ENCODE measurements at regions of chr1 and their contacts with region 1.

Region 1: DNA sequence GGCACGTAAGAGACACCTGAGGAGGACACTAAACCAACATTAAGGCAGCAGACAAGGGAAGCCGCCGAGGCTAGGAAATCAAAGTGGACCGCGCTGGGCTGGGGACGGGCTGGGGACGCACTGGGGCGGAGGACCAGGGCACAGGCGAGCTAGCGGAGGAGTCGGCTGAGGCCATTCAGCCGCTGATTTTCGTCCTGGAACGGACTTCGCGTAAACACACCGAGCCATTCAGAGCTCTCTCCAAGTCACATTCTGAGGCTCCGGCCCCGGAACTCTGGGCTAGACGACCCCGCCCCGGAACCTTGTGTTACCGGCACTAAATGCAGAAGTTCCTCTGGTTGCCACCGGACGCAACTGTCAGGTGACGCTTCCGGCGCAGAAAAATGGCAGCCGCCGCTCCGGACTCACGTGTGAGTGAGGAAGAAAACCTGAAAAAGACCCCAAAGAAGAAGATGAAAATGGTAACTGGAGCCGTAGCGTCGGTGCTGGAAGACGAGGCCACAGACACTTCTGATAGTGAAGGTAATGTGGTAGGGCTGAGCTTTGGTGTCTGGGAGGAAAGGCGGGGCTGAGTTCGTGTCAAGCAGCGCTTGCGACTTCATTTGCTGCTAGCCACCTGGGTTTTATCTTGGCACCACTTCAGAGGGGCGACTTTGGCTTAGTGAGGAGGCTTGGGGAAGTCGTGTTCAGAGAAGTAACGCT is at the start of gene RRP15:
- DNase-seq: peak; percentile 68 to 88 (median 80)
- ATAC-seq: peak; percentile 92 to 96 (median 96)
- H3K4me3 ChIP-seq: peak within 1 kb of the TSS; percentile 80 to 99
- H3K4me3 Mint-ChIP-seq: peak within 1 kb of the TSS; percentile 92 to 100 (median 100)
- H3K27ac ChIP-seq: peak within 1 kb of the TSS; percentile 30
- H3K27ac Mint-ChIP-seq: peak within 1 kb of the TSS; percentile 96 to 98
- H3K4me1 ChIP-seq: peaks cover 16% of the 10 kb centered on the region in 2 experiments
- H3K4me1 Mint-ChIP-seq: peaks cover 38 to 47% (median 43%) of the 10 kb centered on the region in 3 donors
- H3K27me3 ChIP-seq: peaks cover 0 to 13% of the 10 kb centered on the region in 2 experiments
- H3K27me3 Mint-ChIP-seq: peaks cover 5 to 8% of the 10 kb centered on the region in 2 donors
- total RNA-seq, gene RRP15: 11.7 to 20.9 (median 17.0) TPM

Region 2: DNA sequence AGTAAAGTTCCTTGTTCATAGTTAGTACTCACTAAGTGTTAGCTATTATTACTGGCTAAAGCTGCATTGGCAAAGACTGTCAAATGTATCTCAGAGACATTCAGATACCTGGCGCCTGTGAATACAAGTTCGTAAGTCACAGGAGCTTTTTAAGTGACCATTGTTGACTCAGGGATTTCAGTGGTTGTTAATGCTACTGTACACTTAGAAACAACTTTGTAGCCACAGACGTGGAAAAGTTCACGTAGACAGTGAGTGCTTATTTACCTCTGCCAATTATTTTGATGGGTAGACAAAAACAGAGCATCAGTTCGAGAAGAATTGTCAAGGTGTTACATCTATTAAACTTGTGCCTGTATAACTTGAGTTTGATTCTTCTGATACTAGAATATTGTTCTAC is 59.1 kb before region 1 on chr1:
- CTCF ChIA-PET with region 1: no interaction called
- POLR2A ChIA-PET with region 1: interaction called in 1 of 2 experiments, 10 read pairs
- DNase-seq: no peak
- ATAC-seq: no peak
- H3K4me3 ChIP-seq: no peak overlapping the region
- H3K4me3 Mint-ChIP-seq: no peak overlapping the region
- H3K27ac ChIP-seq: no peak overlapping the region
- H3K27ac Mint-ChIP-seq: no peak overlapping the region
- H3K4me1 ChIP-seq: no peaks in the 10 kb centered on the region
- H3K4me1 Mint-ChIP-seq: no peaks in the 10 kb centered on the region
- H3K27me3 ChIP-seq: no peaks in the 10 kb centered on the region
- H3K27me3 Mint-ChIP-seq: no peaks in the 10 kb centered on the region

Region 3: GRCh38 chr1:218259800-218260199 is 25.3 kb before region 1 on chr1:
- CTCF ChIA-PET with region 1: no interaction called
- POLR2A ChIA-PET with region 1: no interaction called
- DNase-seq: peak in 1 of 35 experiments; percentile 6
- ATAC-seq: no peak
- H3K4me3 ChIP-seq: no peak overlapping the region
- H3K4me3 Mint-ChIP-seq: no peak overlapping the region
- H3K27ac ChIP-seq: no peak overlapping the region
- H3K27ac Mint-ChIP-seq: no peak overlapping the region
- H3K4me1 ChIP-seq: no peaks in the 10 kb centered on the region
- H3K4me1 Mint-ChIP-seq: no peaks in the 10 kb centered on the region
- H3K27me3 ChIP-seq: peaks cover 0 to 7% of the 10 kb centered on the region in 2 experiments
- H3K27me3 Mint-ChIP-seq: peaks cover 7 to 25% of the 10 kb centered on the region in 2 donors

Measured in T-cell (primary cell).